ENCODE measurements at regions of chr20 and their contacts with region 1.

Region 1: GRCh38 chr20:3470627-3471396 is at the start of gene ATRN:
- DNase-seq: peak; percentile 84
- H3K4me3 Mint-ChIP-seq: peak within 1 kb of the TSS; percentile 94
- H3K27ac Mint-ChIP-seq: peak within 1 kb of the TSS; percentile 96
- H3K4me1 Mint-ChIP-seq: peaks cover 26% of the 10 kb centered on the region
- H3K27me3 Mint-ChIP-seq: peaks cover 15% of the 10 kb centered on the region
- CTCF ChIP-seq: no peak
- total RNA-seq, gene ATRN: 29.7 and 34.7 TPM in 2 replicates

Region 2: GRCh38 chr20:3407771-3408637 is 62.8 kb before region 1 on chr20:
- CTCF ChIA-PET with region 1: interaction called, 4 read pairs
- POLR2A ChIA-PET with region 1: interaction called, 28 read pairs
- intact Hi-C with region 1: loop called (anchors 5 kb)
- DNase-seq: peak; percentile 84
- H3K4me3 Mint-ChIP-seq: peak overlapping the region; percentile 90
- H3K27ac Mint-ChIP-seq: peak overlapping the region; percentile 75
- H3K4me1 Mint-ChIP-seq: peaks cover 22% of the 10 kb centered on the region
- H3K27me3 Mint-ChIP-seq: no peaks in the 10 kb centered on the region
- CTCF ChIP-seq: no peak

Region 3: DNA sequence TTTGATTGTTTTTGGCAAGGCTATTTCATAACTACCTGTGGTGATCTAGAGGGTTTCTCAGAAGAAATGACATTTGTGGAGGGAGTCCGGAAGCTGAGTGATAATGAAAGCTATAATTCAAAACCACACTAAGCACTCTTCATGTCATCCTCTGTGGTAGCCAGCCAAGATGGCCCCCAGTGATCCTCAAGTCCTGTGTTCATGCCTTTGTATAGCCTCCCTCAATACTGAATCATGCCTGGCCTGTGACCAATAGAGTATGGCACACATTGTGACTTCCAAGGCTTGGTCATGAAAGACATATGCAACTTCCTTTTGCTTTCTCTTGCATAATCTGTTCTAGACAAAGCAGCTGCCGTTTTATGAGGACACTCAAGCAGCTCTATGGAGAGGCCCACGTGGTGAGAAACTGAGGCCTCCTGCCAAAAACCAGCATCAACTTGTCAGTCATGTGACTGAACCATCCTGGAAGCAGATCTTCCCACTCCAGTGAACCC is 50.6 kb before region 1 on chr20:
- CTCF ChIA-PET with region 1: no interaction called
- POLR2A ChIA-PET with region 1: interaction called, 22 read pairs
- intact Hi-C with region 1: no loop called
- DNase-seq: peak; percentile 94
- H3K4me3 Mint-ChIP-seq: no peak overlapping the region
- H3K27ac Mint-ChIP-seq: peak overlapping the region; percentile 57
- H3K4me1 Mint-ChIP-seq: peaks cover 8% of the 10 kb centered on the region
- H3K27me3 Mint-ChIP-seq: no peaks in the 10 kb centered on the region
- CTCF ChIP-seq: no peak

Region 4: GRCh38 chr20:3483784-3484183 is 13.0 kb after region 1 on chr20:
- CTCF ChIA-PET with region 1: no interaction called
- POLR2A ChIA-PET with region 1: interaction called, 11 read pairs
- intact Hi-C with region 1: no loop called
- DNase-seq: peak; percentile 27
- H3K4me3 Mint-ChIP-seq: no peak overlapping the region
- H3K27ac Mint-ChIP-seq: peak overlapping the region; percentile 40
- H3K4me1 Mint-ChIP-seq: peaks cover 6% of the 10 kb centered on the region
- H3K27me3 Mint-ChIP-seq: no peaks in the 10 kb centered on the region
- CTCF ChIP-seq: no peak

Region 5: DNA sequence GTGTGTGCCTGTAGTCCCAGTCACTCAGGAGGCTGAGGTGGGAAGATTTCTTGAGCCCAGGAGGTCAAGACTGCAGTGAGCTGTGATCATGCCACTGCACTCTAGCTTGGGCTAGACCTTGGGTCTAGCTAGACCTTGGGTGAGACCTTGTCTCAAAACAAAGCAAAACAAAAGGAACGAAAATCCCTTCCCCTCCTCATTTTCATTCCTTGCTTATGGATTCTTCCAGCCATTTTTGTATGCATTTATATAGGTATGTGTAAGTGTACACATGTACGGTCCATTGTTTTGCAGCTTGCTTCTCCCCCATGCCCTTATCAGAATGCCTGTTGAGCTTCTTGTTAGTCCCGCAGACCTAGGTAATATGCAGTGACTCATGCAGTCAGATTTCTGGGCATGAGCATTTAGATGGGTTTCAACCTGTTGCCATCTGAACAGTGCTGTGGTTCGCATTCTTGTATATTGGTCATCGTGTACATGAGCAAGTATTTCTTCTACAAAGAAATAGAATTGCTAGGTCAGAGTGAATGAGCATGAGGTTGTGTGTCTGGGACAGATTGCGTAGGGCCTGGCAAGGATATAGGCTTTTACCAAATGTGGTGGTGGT is 73.2 kb after region 1 on chr20:
- CTCF ChIA-PET with region 1: no interaction called
- POLR2A ChIA-PET with region 1: interaction called, 20 read pairs
- intact Hi-C with region 1: no loop called
- DNase-seq: peak; percentile 89
- H3K4me3 Mint-ChIP-seq: no peak overlapping the region
- H3K27ac Mint-ChIP-seq: peak overlapping the region; percentile 65
- H3K4me1 Mint-ChIP-seq: peaks cover 16% of the 10 kb centered on the region
- H3K27me3 Mint-ChIP-seq: no peaks in the 10 kb centered on the region
- CTCF ChIP-seq: no peak